Natural killer cell (primary cell): ENCODE measurements at regions of chr16 and their contacts with region 1.

Region 1: DNA sequence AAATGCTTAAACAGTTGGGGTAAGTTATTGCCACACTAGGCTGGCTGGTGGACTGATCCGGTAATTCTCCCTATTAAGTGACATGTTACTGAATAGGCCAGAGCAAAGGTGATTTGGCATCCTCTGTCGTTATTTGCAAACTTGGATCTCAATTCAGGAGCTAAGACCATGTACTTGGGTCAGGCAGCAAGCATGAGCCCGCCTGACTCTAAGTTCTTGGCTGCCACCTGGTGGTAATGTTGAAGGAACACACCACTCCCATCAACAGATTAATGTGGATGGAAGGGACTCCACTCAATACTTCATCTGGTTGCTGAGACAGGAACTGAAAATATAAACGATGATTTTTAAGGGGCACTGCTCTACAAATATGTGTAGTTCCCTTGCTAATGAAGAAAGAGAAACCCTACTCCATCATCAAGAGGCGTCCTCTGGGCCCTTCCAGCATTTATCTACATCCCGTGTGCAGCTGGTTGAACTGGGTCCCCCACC is 70.8 kb downstream of the EMP2 start:
- DNase-seq: peak; percentile 28 to 87
- ATAC-seq: peak; percentile 76 to 96 (median 94)
- H3K4me3 ChIP-seq: no peak overlapping the region
- H3K4me3 Mint-ChIP-seq: no peak overlapping the region
- H3K27ac ChIP-seq: no peak overlapping the region
- H3K27ac Mint-ChIP-seq: no peak overlapping the region
- H3K4me1 ChIP-seq: no peaks in the 10 kb centered on the region
- H3K4me1 Mint-ChIP-seq: no peaks in the 10 kb centered on the region
- H3K27me3 ChIP-seq: peaks cover 2% of the 10 kb centered on the region
- H3K27me3 Mint-ChIP-seq: no peaks in the 10 kb centered on the region
- CTCF ChIP-seq: peak; percentile 87

Region 2: DNA sequence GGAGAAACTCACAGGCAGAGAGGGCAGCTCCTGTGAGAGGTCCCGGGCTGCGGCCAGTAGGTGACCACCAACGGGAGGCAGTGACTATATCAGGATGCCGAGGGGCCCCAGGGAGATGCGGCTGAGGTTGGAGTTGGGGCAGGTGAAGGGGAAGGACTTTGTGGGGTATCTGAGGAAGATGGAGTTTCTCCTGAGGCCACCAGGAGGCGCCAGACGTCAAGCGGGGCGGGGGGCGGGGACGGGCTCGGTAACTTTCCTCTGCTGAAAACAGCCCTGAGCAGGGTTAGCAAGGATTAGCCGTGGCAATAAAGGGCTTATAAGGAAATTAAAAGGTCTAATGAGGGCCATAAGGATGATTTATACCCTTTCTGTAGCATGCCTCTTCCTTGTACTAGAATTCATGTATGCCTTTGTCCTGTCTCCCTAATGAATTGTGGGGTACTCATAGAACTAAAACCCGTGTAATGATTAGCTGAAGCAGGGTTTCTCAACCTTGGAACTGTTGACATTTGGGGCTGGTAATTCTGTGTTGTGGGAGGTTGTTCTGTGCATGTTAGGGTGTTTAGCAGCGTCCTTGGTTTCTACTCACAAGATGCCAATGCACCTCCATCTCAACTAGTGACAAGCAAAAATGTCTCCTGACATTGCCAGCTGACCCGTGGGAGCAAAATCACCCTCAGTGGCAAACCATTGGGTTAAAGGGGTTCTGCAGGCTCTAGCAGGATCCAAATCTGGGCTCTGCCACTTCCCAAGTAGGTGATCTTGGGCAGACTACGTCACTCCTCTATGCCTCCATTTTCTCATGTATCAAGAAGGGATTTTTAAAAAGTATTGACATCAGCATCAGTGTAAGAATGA is 252.6 kb before region 1 on chr16:
- intact Hi-C with region 1: loop called (anchors 1 kb)
- DNase-seq: peak; percentile 19 to 75
- ATAC-seq: peak; percentile 53 to 85 (median 68)
- H3K4me3 ChIP-seq: no peak overlapping the region
- H3K4me3 Mint-ChIP-seq: no peak overlapping the region
- H3K27ac ChIP-seq: no peak overlapping the region
- H3K27ac Mint-ChIP-seq: no peak overlapping the region
- H3K4me1 ChIP-seq: no peaks in the 10 kb centered on the region
- H3K4me1 Mint-ChIP-seq: peaks cover 0 to 6% of the 10 kb centered on the region in 2 donors
- H3K27me3 ChIP-seq: no peaks in the 10 kb centered on the region
- H3K27me3 Mint-ChIP-seq: peaks cover 2 to 7% of the 10 kb centered on the region in 2 donors
- CTCF ChIP-seq: peak; percentile 74

Region 3: GRCh38 chr16:10314811-10315210 is 194.8 kb before region 1 on chr16:
- intact Hi-C with region 1: loop called (anchors 1 kb)
- DNase-seq: peak in 1 of 2 donors; percentile 60
- ATAC-seq: peak in 1 of 3 donors; percentile 46
- H3K4me3 ChIP-seq: no peak overlapping the region
- H3K4me3 Mint-ChIP-seq: no peak overlapping the region
- H3K27ac ChIP-seq: no peak overlapping the region
- H3K27ac Mint-ChIP-seq: peak overlapping the region; percentile 26 to 35
- H3K4me1 ChIP-seq: no peaks in the 10 kb centered on the region
- H3K4me1 Mint-ChIP-seq: peaks cover 0 to 10% of the 10 kb centered on the region in 2 donors
- H3K27me3 ChIP-seq: no peaks in the 10 kb centered on the region
- H3K27me3 Mint-ChIP-seq: no peaks in the 10 kb centered on the region
- CTCF ChIP-seq: peak; percentile 45